Posterior vena cava (tissue), 2 donors: ENCODE measurements at regions of chr7 and their contacts with region 1.

Region 1: DNA sequence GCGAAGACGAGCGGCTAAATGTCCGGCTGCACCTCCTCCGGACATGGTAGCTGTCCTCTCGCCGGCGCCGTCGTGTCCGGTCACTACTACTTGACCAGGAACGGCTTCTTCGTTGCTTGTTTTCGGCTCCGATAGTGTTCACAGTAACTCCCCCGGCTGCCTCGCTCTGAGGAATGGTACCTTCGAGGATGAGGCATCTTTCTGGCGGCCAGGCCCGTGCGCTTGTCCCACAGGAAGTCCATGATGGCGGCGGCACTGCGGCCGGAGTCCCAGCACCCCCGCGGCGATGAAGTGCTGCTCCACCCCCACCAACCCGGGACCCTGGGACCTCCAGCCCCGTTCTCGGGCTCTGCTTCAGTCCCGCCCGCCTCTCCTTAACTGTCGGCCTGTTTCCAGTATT is 11.0 kb upstream of the CCDC126 start:
- DNase-seq: no peak

Region 2: DNA sequence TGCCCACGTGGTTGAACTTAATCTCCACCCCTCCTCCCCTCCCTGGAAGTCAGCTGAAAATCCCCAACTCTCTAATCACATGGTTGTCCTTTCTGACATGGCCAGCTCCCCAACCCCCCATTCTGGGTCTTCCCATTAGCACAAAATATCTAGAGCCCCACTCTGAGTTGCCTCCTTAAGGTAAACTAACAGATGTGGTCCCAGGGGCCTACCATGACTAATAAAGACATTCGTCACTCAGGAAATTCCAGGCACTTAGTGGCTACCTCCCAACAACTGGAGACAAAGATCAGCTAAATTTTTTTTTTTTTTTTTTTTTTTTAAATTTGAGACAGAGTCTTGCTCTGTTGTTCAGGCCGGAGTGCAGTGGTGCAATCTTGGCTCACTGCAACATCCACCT is 32.1 kb after region 1 on chr7:
- intact Hi-C with region 1: no loop called
- DNase-seq: no peak

Region 3: GRCh38 chr7:23628370-23628769 is 42.2 kb after region 1 on chr7:
- intact Hi-C with region 1: no loop called
- DNase-seq: no peak

Region 4: DNA sequence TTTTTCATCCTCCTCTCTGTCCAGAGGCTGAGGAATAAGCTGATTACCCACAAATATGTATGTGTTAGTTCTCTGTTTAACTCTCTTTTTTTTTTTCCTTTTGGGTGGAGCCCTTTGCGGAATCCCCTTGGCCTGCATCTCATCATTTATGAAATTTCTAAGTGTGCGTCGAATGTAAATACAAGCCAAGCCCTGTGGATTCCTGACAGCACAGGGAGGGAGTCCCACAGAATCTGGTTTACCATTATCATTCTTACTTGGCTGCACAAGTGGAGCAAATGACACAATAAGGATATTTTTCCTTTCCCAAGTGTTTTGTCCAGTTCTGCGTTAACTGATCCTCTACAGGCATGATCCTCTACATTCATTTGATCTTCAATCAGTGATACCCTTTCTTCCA is 135.3 kb after region 1 on chr7:
- intact Hi-C with region 1: loop called in 1 of 2 experiments (anchors 5 kb)
- DNase-seq: no peak

Region 5: DNA sequence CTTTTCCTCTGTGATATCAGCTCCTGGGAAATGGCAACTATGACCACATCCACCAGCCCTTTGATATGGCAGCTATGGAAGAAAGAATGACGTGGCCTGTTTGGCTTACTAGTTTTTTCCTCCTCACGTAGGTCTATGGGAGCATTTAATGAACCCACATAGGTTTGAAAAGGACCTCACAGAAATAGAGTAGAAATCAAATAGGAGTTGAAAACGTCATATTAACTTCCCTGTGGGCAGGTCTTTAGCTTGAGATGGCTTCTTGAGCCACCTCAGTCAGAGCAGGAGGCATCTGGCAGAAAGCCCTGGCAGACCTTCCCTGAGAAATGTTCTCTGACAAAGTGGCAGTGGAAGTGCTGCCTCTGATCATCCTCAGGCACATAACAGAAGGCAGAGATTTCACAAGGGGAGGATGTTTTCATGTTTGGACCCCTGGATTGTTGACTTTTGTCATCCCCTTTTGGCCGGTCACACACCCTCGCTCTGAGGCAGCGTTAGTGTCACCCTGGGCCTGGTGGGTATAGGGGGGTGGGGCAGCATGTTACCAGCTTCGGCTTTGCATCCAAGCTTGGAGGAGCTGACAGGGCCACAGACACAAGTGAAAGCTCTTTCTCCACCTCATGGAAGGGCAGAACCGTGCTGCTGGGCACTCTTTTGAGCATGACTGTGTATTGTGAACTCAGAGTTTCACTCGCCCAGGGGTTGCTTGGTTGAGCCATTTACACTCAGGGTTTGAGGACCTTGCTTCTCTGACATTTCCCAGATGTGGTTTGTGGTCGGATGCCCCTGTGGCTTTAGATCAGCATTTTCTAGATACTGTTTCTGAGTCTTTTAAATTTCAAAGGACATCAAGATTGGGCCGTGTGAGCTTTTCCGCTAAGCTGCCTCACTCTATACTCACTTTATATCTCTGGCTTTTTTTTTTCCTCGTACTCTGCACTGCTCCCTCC is 308.1 kb after region 1 on chr7:
- intact Hi-C with region 1: no loop called
- DNase-seq: no peak